ENCODE measurements at regions of chr1 and their contacts with region 1.

Region 1: GRCh38 chr1:25796811-25797458 is 3.1 kb upstream of the SELENON start:
- DNase-seq: peak; percentile 49 to 78
- ATAC-seq: peak; percentile 60 to 62
- H3K4me3 ChIP-seq: peak overlapping the region; percentile 19 to 38 (median 36)
- H3K27ac ChIP-seq: peak overlapping the region; percentile 88 to 91 (median 90)
- H3K4me1 ChIP-seq: peaks cover 53 to 65% of the 10 kb centered on the region in 2 donors
- H3K27me3 ChIP-seq: no peaks in the 10 kb centered on the region
- CTCF ChIP-seq: peak; percentile 80 to 90 (median 85)
- POLR2A ChIP-seq: no peak

Region 2: DNA sequence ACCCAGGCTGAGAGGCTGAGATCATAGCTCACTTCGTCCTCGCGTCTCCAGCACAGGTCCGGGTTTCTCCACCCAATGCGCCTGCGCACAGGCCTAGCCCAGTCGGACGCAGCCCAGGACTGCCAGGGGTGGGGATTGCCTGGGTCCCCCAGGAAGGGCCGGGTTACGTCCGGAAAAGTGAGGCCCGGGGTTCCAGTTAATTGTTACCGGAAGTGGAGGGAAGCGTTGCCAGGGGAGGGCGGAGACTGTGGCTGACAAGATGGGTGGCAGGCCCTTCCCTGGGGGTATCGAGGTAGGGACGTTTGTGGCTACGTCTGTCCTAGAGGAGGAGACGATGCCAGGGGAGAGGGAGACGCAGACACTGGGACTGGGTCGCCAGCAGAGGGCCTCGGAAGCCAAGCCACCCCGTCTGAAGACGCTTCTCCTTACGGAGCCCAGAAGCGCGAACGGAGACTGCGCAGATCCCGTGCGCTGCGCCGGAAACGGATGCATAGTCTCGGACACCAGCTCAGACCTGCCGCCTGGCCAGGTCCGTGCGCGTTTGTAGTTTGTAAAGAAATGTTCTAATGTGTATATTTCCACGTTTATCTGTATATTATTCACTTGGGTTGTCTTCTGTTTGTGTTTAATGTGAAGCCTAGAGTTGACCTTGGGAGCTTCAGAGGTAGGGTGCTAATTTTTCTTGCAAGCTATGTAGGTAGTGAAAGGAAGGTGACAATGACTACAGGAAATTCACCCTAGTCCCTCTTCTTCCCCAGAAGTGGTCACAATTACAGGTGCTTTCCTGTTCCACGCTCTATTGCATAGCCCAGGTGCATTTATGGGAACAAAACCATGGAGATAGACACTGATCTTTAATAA is 557.0 kb before region 1 on chr1:
- in situ Hi-C with region 1: no loop called
- intact Hi-C with region 1: loop called (anchors 10 kb)
- DNase-seq: peak; percentile 86 to 95
- ATAC-seq: peak; percentile 89 to 91
- H3K4me3 ChIP-seq: peak overlapping the region; percentile 48 to 59 (median 52)
- H3K27ac ChIP-seq: peak overlapping the region; percentile 88 to 97 (median 92)
- H3K4me1 ChIP-seq: peaks cover 41 to 56% of the 10 kb centered on the region in 2 donors
- H3K27me3 ChIP-seq: no peaks in the 10 kb centered on the region
- CTCF ChIP-seq: peak in 4 of 5 experiments; percentile 73 to 79 (median 76)
- POLR2A ChIP-seq: peak; percentile 32 to 37

Region 3: GRCh38 chr1:25543425-25544242 is 253.3 kb before region 1 on chr1 and contains the start of gene LDLRAP1:
- in situ Hi-C with region 1: no loop called
- intact Hi-C with region 1: loop called (anchors 5 kb)
- DNase-seq: peak; percentile 48 to 68
- ATAC-seq: peak; percentile 88
- H3K4me3 ChIP-seq: peak within 1 kb of the TSS; percentile 76 to 95 (median 89)
- H3K27ac ChIP-seq: peak within 1 kb of the TSS; percentile 82 to 97 (median 93)
- H3K4me1 ChIP-seq: peaks cover 25 to 29% of the 10 kb centered on the region in 2 donors
- H3K27me3 ChIP-seq: no peaks in the 10 kb centered on the region
- CTCF ChIP-seq: no peak
- POLR2A ChIP-seq: peak; percentile 98 to 99
- total RNA-seq, gene LDLRAP1: 10.0 to 17.9 (median 14.2) TPM

Region 4: GRCh38 chr1:25590096-25590824 is 206.7 kb before region 1 on chr1:
- in situ Hi-C with region 1: no loop called
- intact Hi-C with region 1: no loop called
- DNase-seq: no peak
- ATAC-seq: no peak
- H3K4me3 ChIP-seq: no peak overlapping the region
- H3K27ac ChIP-seq: no peak overlapping the region
- H3K4me1 ChIP-seq: peaks cover 0 to 3% of the 10 kb centered on the region in 2 donors
- H3K27me3 ChIP-seq: no peaks in the 10 kb centered on the region
- CTCF ChIP-seq: peak in 1 of 5 experiments; percentile 20
- POLR2A ChIP-seq: no peak

Region 5: DNA sequence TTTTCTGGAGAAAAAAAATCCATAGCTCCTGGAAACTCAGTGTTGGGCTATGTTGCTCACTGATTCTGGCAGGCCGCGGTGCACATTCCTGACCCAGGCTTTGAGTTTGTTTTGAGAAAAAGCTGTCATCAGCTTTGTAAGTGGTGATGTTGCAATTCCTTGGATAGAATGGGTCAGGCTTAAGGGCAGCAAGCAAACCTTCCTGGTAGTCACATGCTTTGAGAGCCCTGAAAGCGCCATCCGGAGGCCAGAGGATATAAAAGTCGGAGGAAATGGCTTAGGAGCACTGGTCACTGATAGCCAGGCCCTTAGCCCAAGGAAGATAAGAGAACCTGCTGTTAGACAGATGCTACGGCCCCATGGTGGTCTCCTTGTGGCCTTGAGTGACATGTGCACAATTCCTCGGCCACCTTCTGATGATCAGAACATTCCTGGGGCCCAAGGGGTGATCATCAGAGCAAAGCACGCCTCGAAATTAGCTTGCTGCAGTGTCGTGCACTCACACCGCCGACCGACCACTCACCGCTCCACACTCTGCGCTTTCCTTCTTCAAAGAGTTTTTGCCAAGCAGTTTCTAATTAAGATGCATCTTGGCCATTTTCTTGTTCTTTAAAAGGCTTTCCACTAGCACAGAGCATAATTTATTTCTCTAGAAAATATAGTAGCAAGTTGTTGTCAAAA is 101.7 kb before region 1 on chr1:
- in situ Hi-C with region 1: no loop called
- intact Hi-C with region 1: loop called (anchors 2 kb)
- DNase-seq: peak; percentile 75 to 85
- ATAC-seq: peak; percentile 75 to 77
- H3K4me3 ChIP-seq: no peak overlapping the region
- H3K27ac ChIP-seq: peak overlapping the region; percentile 48 to 76 (median 70)
- H3K4me1 ChIP-seq: peaks cover 40 to 44% of the 10 kb centered on the region in 2 donors
- H3K27me3 ChIP-seq: no peaks in the 10 kb centered on the region
- CTCF ChIP-seq: peak in 1 of 5 experiments; percentile 20
- POLR2A ChIP-seq: no peak

Region 6: GRCh38 chr1:25771246-25772114 is 25.5 kb before region 1 on chr1:
- in situ Hi-C with region 1: no loop called
- intact Hi-C with region 1: loop called (anchors 2 kb)
- DNase-seq: peak; percentile 33 to 70
- ATAC-seq: peak; percentile 38 to 55
- H3K4me3 ChIP-seq: peak overlapping the region in 1 of 4 donors; percentile 20
- H3K27ac ChIP-seq: peak overlapping the region; percentile 56 to 77 (median 72)
- H3K4me1 ChIP-seq: peaks cover 39 to 40% of the 10 kb centered on the region in 2 donors
- H3K27me3 ChIP-seq: no peaks in the 10 kb centered on the region
- CTCF ChIP-seq: no peak
- POLR2A ChIP-seq: no peak

Measured in gastrocnemius medialis (tissue), 4 donors.